CD4-positive, alpha-beta T cell (primary cell): ENCODE measurements at regions of chr1 and their contacts with region 1.

Region 1: GRCh38 chr1:243642936-243643335 is 207.1 kb downstream of the AKT3 start:
- DNase-seq: no peak
- ATAC-seq: no peak
- H3K4me3 ChIP-seq: no peak overlapping the region
- H3K4me3 Mint-ChIP-seq: no peak overlapping the region
- H3K27ac ChIP-seq: no peak overlapping the region
- H3K27ac Mint-ChIP-seq: no peak overlapping the region
- H3K4me1 ChIP-seq: no peaks in the 10 kb centered on the region
- H3K4me1 Mint-ChIP-seq: peaks cover 6% of the 10 kb centered on the region
- H3K27me3 ChIP-seq: no peaks in the 10 kb centered on the region
- H3K27me3 Mint-ChIP-seq: no peaks in the 10 kb centered on the region
- CTCF ChIP-seq: no peak

Region 2: GRCh38 chr1:243514927-243515326 is 128.0 kb before region 1 on chr1:
- CTCF ChIA-PET with region 1: no interaction called
- POLR2A ChIA-PET with region 1: no interaction called
- intact Hi-C with region 1: loop called in 1 of 2 experiments (anchors 5 kb)
- DNase-seq: no peak
- ATAC-seq: no peak
- H3K4me3 ChIP-seq: no peak overlapping the region
- H3K4me3 Mint-ChIP-seq: no peak overlapping the region
- H3K27ac ChIP-seq: no peak overlapping the region
- H3K27ac Mint-ChIP-seq: no peak overlapping the region
- H3K4me1 ChIP-seq: no peaks in the 10 kb centered on the region
- H3K4me1 Mint-ChIP-seq: peaks cover 16% of the 10 kb centered on the region
- H3K27me3 ChIP-seq: no peaks in the 10 kb centered on the region
- H3K27me3 Mint-ChIP-seq: no peaks in the 10 kb centered on the region
- CTCF ChIP-seq: no peak

Region 3: DNA sequence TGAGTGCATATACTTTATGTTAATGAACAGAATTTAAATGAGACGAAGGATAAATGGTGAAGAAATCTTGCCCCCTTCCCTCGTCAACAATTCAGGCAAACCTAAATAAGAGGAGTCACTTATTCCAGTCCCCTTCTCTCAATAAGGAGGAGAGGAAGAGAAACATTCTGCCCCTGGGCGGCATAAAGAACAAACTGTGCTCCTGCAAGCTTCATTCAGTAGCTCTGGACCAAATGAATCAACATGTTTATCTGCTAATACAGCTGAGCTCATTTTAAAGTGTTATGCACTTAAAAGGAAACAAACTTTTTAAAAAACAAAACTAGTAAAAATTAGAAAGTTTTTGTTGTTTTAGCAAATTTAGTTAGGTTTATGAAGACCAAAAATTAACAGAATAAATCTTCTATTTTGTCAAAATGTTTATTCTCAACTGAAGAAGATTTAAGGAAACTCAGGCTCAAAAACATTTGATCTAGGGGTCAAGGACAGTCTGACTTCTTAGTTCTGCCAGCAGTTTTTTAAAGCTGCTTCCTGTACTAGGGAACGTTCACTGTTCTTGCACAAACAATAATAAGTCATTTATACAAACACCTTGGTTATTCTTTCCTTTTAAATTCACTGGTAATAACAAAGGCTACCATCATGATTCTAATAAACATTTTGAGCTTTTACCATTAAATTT is 148.8 kb after region 1 on chr1:
- CTCF ChIA-PET with region 1: no interaction called
- POLR2A ChIA-PET with region 1: no interaction called
- intact Hi-C with region 1: no loop called
- DNase-seq: no peak
- ATAC-seq: no peak
- H3K4me3 ChIP-seq: no peak overlapping the region
- H3K4me3 Mint-ChIP-seq: no peak overlapping the region
- H3K27ac ChIP-seq: no peak overlapping the region
- H3K27ac Mint-ChIP-seq: peak overlapping the region; percentile 35
- H3K4me1 ChIP-seq: peaks cover 12% of the 10 kb centered on the region
- H3K4me1 Mint-ChIP-seq: peaks cover 88% of the 10 kb centered on the region
- H3K27me3 ChIP-seq: no peaks in the 10 kb centered on the region
- H3K27me3 Mint-ChIP-seq: no peaks in the 10 kb centered on the region
- CTCF ChIP-seq: no peak